ENCODE measurements at regions of chr1 and their contacts with region 1.

Region 1: DNA sequence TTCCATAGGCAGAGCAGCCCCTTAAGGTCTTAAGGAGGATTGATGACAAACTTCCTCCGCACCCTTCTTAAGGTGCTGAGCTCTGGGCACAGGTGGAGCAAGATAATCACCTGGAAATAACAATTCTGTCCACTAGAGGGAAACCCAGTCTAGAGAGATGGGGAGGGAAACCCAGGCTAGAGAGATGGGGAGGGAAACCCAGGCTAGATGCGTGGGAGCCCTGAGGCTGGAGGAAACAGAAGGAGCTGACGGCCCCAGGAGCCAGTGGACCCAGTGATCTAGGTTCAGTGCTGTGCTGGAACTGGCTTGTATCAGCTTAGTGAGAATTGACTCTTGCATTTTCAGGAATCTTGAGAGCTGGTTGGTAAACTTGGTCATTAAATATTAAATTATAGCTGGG is 17.8 kb upstream of the MYCL start:
- DNase-seq: peak; percentile 50
- ATAC-seq: peak; percentile 95
- H3K4me3 Mint-ChIP-seq: no peak overlapping the region
- H3K27ac Mint-ChIP-seq: no peak overlapping the region
- H3K4me1 Mint-ChIP-seq: no peaks in the 10 kb centered on the region
- H3K27me3 Mint-ChIP-seq: no peaks in the 10 kb centered on the region

Region 2: GRCh38 chr1:39901698-39902459 is 17.7 kb before region 1 on chr1 and contains the start of gene MYCL:
- CTCF ChIA-PET with region 1: interaction called, 14 read pairs
- POLR2A ChIA-PET with region 1: interaction called, 3 read pairs
- DNase-seq: peak; percentile 81
- ATAC-seq: peak; percentile 89
- H3K4me3 Mint-ChIP-seq: peak within 1 kb of the TSS; percentile 72
- H3K27ac Mint-ChIP-seq: no peak within 1 kb of the TSS
- H3K4me1 Mint-ChIP-seq: peaks cover 6% of the 10 kb centered on the region
- H3K27me3 Mint-ChIP-seq: peaks cover 56% of the 10 kb centered on the region
- total RNA-seq, gene MYCL: not detected

Region 3: DNA sequence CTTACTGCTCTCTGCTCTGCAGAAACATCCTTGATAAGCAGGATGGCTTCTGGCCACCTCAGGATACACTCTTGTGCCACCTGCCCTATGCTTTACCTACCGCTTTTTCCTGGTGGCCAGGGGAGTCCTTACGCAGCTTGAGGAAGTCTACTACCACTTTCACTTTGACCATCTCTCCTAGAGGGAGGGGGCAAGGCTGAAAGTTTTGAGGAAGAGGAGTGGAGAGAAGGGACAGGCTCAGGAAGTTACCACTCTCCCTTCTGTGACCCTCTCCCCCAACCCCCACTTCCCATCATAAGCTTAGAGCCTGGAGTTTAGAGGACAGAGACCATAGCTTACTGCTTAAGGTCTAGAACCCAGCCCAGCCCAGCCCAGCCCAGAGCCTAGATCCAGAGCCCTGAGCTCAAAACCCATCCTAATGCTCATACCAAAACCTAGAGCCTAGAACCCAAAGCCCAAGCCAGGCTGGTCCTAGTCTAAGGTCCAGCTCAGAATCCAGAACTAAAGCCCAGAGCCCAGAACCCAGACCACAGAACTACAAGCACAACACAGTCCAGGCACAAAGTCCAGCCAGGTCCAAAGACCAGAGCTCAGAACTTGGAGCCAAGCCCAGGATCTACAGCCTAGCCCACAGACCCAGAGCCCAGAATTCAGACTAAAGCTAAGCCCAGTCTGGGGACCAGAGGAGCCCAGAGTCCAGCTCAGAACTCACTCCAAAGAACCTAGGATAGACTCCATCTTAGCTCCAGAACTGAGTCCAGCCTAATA is 17.4 kb after region 1 on chr1:
- CTCF ChIA-PET with region 1: interaction called, 12 read pairs
- POLR2A ChIA-PET with region 1: no interaction called
- DNase-seq: no peak
- ATAC-seq: no peak
- H3K4me3 Mint-ChIP-seq: no peak overlapping the region
- H3K27ac Mint-ChIP-seq: no peak overlapping the region
- H3K4me1 Mint-ChIP-seq: peaks cover 2% of the 10 kb centered on the region
- H3K27me3 Mint-ChIP-seq: no peaks in the 10 kb centered on the region

Region 4: DNA sequence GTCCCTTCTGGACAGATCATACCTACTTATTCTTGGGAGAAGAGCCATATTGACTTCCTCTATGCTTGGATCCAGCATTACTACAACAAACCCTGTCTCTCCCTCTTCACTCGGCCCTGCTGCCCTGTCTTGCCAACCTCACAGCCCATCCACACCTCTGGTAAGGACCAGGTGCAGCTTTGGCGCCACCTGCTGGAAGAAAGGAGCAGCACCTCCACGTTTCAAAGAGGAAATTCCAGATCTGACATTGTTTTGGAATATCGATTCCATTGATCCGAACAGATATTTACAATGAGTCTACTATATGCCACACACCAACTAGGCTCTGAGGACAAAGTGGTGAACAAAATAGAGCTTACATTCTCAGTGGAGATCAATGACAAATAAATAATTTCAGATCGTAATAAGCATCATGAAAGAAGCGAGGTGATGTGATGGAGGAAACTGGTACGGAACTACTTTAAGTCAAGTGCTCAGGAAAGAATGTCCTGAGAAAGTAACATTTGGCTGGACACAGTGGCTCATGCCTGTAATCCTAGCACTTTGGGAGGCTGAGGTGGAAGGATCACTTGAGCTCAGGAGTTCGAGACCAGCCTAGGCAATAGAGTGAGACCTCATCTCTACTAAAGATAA is 54.1 kb after region 1 on chr1:
- CTCF ChIA-PET with region 1: interaction called, 99 read pairs
- POLR2A ChIA-PET with region 1: no interaction called
- DNase-seq: peak; percentile 78
- ATAC-seq: peak; percentile 77
- H3K4me3 Mint-ChIP-seq: no peak overlapping the region
- H3K27ac Mint-ChIP-seq: no peak overlapping the region
- H3K4me1 Mint-ChIP-seq: peaks cover 5% of the 10 kb centered on the region
- H3K27me3 Mint-ChIP-seq: no peaks in the 10 kb centered on the region

Region 5: DNA sequence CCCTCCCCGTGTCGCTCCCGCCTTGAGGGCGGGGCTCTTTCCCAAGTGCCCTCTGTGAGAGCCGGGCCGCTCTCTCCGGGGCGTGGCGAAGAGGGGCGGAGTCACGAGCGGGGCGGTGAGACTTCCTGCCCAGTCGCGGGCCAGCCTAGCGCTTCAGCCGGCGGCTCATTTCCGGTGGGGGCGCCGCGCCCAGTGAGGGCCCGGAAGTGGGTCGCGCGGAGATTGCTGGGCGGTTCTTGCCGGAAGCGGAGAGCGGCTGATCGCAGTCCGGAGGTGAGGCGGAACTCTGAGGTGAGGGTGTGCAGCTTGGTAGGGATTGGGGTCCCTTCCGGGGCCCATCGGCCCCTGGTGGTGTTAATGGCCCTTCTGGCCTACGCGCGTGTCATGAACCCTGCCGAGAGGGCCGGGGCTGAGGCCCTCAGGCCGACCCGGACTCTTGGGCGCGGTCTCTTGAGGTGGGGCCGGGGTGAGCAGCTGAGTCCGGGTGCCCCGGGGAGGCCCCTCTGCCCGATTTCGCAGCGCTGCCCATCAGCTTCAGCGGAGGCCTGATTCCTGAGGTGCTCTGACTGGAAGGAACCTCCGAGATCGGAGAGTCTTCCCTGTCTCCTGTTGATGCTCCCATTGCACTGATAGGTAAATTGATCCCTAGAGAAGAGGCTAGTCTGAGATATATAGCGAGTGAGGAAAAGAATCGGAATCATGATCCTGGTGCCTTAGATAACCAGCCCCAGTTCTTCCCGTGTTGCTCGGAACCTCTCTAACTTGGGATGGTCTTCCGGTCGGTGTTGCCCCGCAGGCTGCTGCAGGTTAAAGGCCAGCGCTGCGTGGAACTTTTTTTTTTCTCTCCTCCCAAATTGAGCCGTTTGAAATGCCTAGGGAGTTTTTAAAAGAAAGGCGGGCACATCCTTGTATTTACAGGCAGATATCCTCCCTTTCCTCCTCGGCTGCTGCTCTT is 121.2 kb after region 1 on chr1 and contains the start of gene CAP1:
- CTCF ChIA-PET with region 1: interaction called, 12 read pairs
- POLR2A ChIA-PET with region 1: no interaction called
- DNase-seq: peak; percentile 100
- ATAC-seq: peak; percentile 89
- H3K4me3 Mint-ChIP-seq: peak within 1 kb of the TSS; percentile 93
- H3K27ac Mint-ChIP-seq: peak within 1 kb of the TSS; percentile 99
- H3K4me1 Mint-ChIP-seq: peaks cover 61% of the 10 kb centered on the region
- H3K27me3 Mint-ChIP-seq: no peaks in the 10 kb centered on the region
- total RNA-seq, gene CAP1: 805 to 847 TPM